Activated CD4-positive, alpha-beta memory T cell treated with anti-CD3 and anti-CD28 coated beads for 36 hours (primary cell): ENCODE measurements at regions of chr18 and their contacts with region 1.

Region 1: GRCh38 chr18:54392543-54393023 is 34.9 kb downstream of the C18orf54 start:
- DNase-seq: no peak
- H3K4me3 Mint-ChIP-seq: no peak overlapping the region
- H3K27ac Mint-ChIP-seq: no peak overlapping the region
- H3K4me1 Mint-ChIP-seq: peaks cover 17% of the 10 kb centered on the region
- H3K27me3 Mint-ChIP-seq: peaks cover 7% of the 10 kb centered on the region

Region 2: GRCh38 chr18:54357660-54358494 is 34.7 kb before region 1 on chr18 and contains the starts of genes C18orf54 and STARD6:
- CTCF ChIA-PET with region 1: interaction called, 25 read pairs
- POLR2A ChIA-PET with region 1: no interaction called
- intact Hi-C with region 1: loop called (anchors 1 kb)
- DNase-seq: peak; percentile 93
- H3K4me3 Mint-ChIP-seq: peak within 1 kb of the TSS; percentile 95
- H3K27ac Mint-ChIP-seq: peak within 1 kb of the TSS; percentile 81
- H3K4me1 Mint-ChIP-seq: peaks cover 14% of the 10 kb centered on the region
- H3K27me3 Mint-ChIP-seq: peaks cover 3% of the 10 kb centered on the region
- total RNA-seq, gene C18orf54: 11.7 to 12.2 TPM
- total RNA-seq, gene STARD6: not detected

Region 3: GRCh38 chr18:54647176-54647575 is 254.6 kb after region 1 on chr18:
- CTCF ChIA-PET with region 1: no interaction called
- POLR2A ChIA-PET with region 1: no interaction called
- intact Hi-C with region 1: loop called (anchors 5 kb)
- DNase-seq: no peak
- H3K4me3 Mint-ChIP-seq: no peak overlapping the region
- H3K27ac Mint-ChIP-seq: no peak overlapping the region
- H3K4me1 Mint-ChIP-seq: no peaks in the 10 kb centered on the region
- H3K27me3 Mint-ChIP-seq: peaks cover 15% of the 10 kb centered on the region

Region 4: DNA sequence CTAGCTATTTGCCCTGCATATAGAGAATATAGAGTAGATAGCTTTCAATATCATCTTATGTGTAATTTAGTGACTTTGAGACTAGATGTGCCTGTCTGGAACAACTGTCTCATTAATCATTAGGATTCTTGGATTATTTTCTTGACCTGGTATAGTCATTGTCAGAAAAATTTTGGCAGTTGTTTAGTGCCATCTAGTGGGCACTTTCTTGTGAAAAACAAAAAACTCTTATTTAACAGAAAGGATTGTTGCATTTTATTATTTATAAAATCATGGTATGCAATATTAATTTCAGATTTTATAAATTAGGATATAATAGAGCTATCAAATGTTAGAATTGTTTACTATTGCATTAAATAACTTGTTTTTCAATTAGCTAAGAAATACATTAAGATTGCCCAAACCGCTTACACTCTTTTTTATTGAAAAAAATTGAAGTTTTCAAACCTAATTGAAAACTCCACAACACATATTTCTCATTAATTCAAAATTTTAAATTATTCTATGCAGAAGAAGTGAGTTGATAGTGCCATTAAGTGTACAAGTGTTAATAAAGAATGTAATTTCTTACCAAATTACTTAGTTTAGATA is 278.8 kb after region 1 on chr18:
- CTCF ChIA-PET with region 1: interaction called, 23 read pairs
- POLR2A ChIA-PET with region 1: no interaction called
- intact Hi-C with region 1: loop called (anchors 1 kb)
- DNase-seq: no peak
- H3K4me3 Mint-ChIP-seq: no peak overlapping the region
- H3K27ac Mint-ChIP-seq: no peak overlapping the region
- H3K4me1 Mint-ChIP-seq: no peaks in the 10 kb centered on the region
- H3K27me3 Mint-ChIP-seq: peaks cover 4% of the 10 kb centered on the region

Region 5: GRCh38 chr18:54717673-54718407 is 325.3 kb after region 1 on chr18:
- CTCF ChIA-PET with region 1: interaction called, 5 read pairs
- POLR2A ChIA-PET with region 1: no interaction called
- intact Hi-C with region 1: loop called (anchors 5 kb)
- DNase-seq: peak; percentile 62
- H3K4me3 Mint-ChIP-seq: peak overlapping the region; percentile 61
- H3K27ac Mint-ChIP-seq: peak overlapping the region; percentile 23
- H3K4me1 Mint-ChIP-seq: peaks cover 32% of the 10 kb centered on the region
- H3K27me3 Mint-ChIP-seq: peaks cover 5% of the 10 kb centered on the region

Region 6: GRCh38 chr18:54983041-54983686 is 590.6 kb after region 1 on chr18:
- CTCF ChIA-PET with region 1: interaction called, 4 read pairs
- POLR2A ChIA-PET with region 1: no interaction called
- intact Hi-C with region 1: loop called (anchors 2 kb)
- DNase-seq: no peak
- H3K4me3 Mint-ChIP-seq: no peak overlapping the region
- H3K27ac Mint-ChIP-seq: no peak overlapping the region
- H3K4me1 Mint-ChIP-seq: no peaks in the 10 kb centered on the region
- H3K27me3 Mint-ChIP-seq: peaks cover 3% of the 10 kb centered on the region